Activated B cell treated with CpG ODN at 0.5 μM for 24 hours (primary cell): ENCODE measurements at regions of chr12 and their contacts with region 1.

Region 1: DNA sequence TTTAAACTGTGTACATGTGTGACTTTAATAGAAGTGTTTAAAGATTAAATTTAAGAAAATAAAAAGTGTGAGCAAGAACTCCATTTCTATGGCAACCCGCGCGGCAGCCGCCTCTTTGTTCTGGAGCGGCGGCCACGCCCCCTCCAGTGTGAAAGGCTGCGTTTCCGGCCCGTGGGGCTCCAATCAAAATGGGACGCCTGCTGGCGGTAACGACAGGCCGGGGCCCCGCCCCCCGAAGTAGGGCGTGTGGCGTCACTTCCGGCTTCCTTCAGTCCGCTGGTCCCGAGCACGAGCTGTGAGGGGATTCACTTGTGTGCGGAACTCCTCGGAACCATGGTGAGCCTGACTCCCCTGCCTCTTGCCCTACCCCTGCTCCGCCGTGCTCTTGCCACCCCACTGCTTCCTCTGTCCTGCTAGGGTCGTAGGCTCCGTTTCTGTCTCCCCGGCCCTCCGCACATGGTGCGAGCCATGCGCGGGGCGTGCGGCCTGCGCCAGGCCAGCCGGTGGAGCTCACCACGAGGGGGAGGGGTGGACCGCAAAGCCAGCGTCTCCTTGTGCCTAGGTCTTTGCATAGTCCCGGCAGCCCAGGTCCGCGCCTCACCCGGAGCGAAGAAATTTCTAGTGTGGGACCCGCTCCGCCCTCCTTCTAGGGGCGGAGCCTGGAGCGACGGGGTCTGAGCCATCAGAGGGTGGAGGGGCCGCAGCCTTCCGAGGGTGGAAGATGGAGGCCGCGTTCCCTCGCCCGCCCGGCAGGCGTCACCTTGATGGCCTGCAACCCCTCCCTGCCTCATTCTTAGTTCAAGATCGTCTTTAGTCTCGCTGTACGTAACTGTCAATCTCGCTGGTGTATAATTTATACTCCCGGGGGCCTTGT is at the start of gene CCT2:
- DNase-seq: peak; percentile 91
- ATAC-seq: peak; percentile 90
- H3K4me3 Mint-ChIP-seq: peak within 1 kb of the TSS; percentile 96
- H3K27ac Mint-ChIP-seq: peak within 1 kb of the TSS; percentile 95
- H3K4me1 Mint-ChIP-seq: peaks cover 8% of the 10 kb centered on the region
- H3K27me3 Mint-ChIP-seq: no peaks in the 10 kb centered on the region
- CTCF ChIP-seq: no peak
- total RNA-seq, gene CCT2: 205 and 211 TPM in 2 replicates

Region 2: GRCh38 chr12:69470189-69471075 is 115.0 kb before region 1 on chr12 and contains the start of gene FRS2:
- CTCF ChIA-PET with region 1: no interaction called
- POLR2A ChIA-PET with region 1: interaction called, 4 read pairs
- intact Hi-C with region 1: loop called (anchors 1 kb)
- DNase-seq: peak; percentile 77
- ATAC-seq: peak; percentile 98
- H3K4me3 Mint-ChIP-seq: peak within 1 kb of the TSS; percentile 99
- H3K27ac Mint-ChIP-seq: peak within 1 kb of the TSS; percentile 95
- H3K4me1 Mint-ChIP-seq: peaks cover 77% of the 10 kb centered on the region
- H3K27me3 Mint-ChIP-seq: no peaks in the 10 kb centered on the region
- CTCF ChIP-seq: no peak
- total RNA-seq, gene FRS2: 23.2 and 23.8 TPM in 2 replicates

Region 3: DNA sequence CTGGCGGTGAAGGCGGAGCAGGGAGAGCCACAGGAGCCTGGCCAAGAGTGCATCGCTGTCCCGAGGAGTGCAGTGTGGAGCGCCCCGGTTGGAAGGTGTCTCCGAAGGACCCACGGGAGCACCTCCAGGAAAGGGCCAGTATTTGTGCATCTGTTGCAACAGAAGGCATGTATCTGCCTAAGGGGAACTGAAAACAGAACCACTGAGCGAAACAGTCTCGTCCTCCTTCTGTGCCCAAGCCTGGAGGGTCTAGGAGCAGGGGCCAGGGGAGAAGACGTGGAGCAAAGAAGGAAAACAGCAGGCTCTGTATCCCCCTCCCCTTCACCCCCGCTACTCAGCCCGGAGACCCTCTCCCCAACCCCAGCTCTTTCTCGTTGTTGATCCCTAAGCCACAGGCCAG is 30.6 kb after region 1 on chr12:
- CTCF ChIA-PET with region 1: no interaction called
- POLR2A ChIA-PET with region 1: no interaction called
- intact Hi-C with region 1: no loop called
- DNase-seq: no peak
- ATAC-seq: no peak
- H3K4me3 Mint-ChIP-seq: no peak overlapping the region
- H3K27ac Mint-ChIP-seq: no peak overlapping the region
- H3K4me1 Mint-ChIP-seq: peaks cover 4% of the 10 kb centered on the region
- H3K27me3 Mint-ChIP-seq: peaks cover 8% of the 10 kb centered on the region
- CTCF ChIP-seq: no peak

Region 4: GRCh38 chr12:69738351-69739286 is 153.2 kb after region 1 on chr12 and contains the start of gene RAB3IP:
- CTCF ChIA-PET with region 1: no interaction called
- POLR2A ChIA-PET with region 1: no interaction called
- intact Hi-C with region 1: loop called (anchors 1 kb)
- DNase-seq: peak; percentile 93
- ATAC-seq: peak; percentile 90
- H3K4me3 Mint-ChIP-seq: peak within 1 kb of the TSS; percentile 85
- H3K27ac Mint-ChIP-seq: peak within 1 kb of the TSS; percentile 73
- H3K4me1 Mint-ChIP-seq: peaks cover 19% of the 10 kb centered on the region
- H3K27me3 Mint-ChIP-seq: peaks cover 4% of the 10 kb centered on the region
- CTCF ChIP-seq: no peak
- total RNA-seq, gene RAB3IP: 34.6 and 37.9 TPM in 2 replicates